GM12878 (cell line): ENCODE measurements at regions of chr16 and their contacts with region 1.

Region 1: DNA sequence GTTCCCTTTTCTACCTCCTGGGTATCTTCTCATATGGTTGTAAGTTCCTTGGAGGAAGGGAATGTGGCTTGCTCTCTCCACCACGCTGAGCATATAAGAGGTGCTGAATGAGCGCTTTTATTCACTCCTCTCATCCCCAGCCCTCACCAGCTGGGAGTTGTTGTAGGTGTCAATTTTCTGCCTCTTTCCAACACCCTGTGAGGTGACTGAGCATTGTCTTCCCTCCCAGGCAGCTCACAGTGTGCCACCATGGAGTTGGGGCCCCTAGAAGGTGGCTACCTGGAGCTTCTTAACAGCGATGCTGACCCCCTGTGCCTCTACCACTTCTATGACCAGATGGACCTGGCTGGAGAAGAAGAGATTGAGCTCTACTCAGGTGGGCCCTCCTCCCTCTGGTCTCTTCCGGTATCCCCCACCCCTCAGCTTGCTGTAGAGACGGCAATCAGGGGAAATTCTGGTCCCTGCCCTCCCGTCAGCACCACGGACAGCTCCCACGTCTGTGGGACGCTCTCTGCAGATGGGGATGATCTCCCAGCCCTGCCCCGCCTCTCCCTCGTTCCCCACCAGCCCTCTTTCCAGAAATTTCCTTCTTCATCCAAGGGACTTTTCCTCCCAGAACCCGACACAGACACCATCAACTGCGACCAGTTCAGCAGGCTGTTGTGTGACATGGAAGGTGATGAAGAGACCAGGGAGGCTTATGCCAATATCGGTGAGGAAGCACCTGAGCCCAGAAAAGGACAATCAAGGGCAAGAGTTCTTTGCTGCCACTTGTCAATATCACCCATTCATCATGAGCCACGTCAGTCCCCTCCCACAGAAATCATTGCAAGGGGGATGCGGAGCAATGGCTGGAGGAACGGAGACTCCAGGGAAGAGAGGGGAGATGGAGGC is 18.3 kb downstream of the CIITA start:
- DNase-seq: no peak
- ATAC-seq: no peak
- H3K4me3 ChIP-seq: no peak overlapping the region
- H3K27ac ChIP-seq: no peak overlapping the region
- H3K4me1 ChIP-seq: peaks cover 68% of the 10 kb centered on the region
- H3K27me3 ChIP-seq: no peaks in the 10 kb centered on the region
- CTCF ChIP-seq: no peak
- EP300 ChIP-seq: no peak
- POLR2A ChIP-seq: no peak
- RAD21 ChIP-seq: no peak

Region 2: DNA sequence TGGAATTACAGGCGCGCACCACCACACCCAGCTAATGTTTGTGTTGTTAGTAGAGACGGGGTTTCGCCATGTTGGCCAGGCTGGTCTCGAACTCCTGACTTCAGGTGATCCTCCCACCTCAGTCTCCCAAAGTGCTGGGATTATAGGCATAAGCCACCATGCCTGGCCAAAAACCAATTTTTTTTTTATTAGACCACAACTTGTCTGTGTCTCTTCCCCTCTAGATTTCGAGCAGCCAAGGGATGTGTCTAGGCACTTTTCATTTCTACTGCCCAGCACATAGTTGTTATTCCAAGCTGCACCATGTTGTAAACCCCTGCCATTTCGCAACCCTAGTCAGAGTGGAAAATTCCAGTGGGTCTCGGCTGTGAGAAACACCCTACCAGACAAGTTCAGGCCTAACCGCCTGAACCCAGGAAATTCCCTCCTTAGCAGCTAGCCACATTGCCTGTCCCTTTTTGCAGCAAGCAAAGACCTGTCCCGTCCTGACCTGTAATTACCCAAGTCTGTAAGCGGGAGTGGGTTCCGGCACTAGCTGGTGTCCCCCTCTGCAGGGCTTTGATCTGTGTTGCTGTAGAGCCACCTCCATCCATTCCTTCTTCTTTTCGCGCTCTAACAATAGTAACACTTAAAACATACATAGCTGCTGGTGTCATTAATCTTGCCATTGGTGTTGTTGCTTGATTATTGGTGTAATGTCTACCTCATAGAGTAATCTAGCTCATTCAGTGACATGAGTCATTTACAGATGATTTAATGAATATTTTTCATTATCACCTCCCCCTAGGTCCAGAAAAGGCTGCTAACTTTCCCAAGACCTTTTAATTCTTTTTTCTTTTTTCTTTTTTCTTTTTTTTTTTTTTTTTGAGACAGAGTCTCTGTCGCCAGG is 586.8 kb before region 1 on chr16:
- CTCF ChIA-PET with region 1: no interaction called
- POLR2A ChIA-PET with region 1: no interaction called
- RAD21 ChIA-PET with region 1: no interaction called
- SMC1A ChIA-PET with region 1: no interaction called
- in situ Hi-C with region 1: loop called (anchors 25 kb)
- intact Hi-C with region 1: loop called (anchors 10 kb)
- DNase-seq: peak; percentile 16
- ATAC-seq: peak; percentile 24
- H3K4me3 ChIP-seq: no peak overlapping the region
- H3K27ac ChIP-seq: peak overlapping the region; percentile 50
- H3K4me1 ChIP-seq: peaks cover 31% of the 10 kb centered on the region
- H3K27me3 ChIP-seq: no peaks in the 10 kb centered on the region
- CTCF ChIP-seq: peak in 1 of 3 experiments; percentile 5; a peak in 1 of 6 replicates
- EP300 ChIP-seq: no peak
- POLR2A ChIP-seq: no peak
- RAD21 ChIP-seq: no peak